Gastrocnemius medialis (tissue), 4 donors: ENCODE measurements at regions of chr14 and their contacts with region 1.

Region 1: GRCh38 chr14:34453229-34453628 is 8.8 kb downstream of the SPTSSA start:
- DNase-seq: no peak
- ATAC-seq: peak in 1 of 2 donors; percentile 36
- H3K4me3 ChIP-seq: no peak overlapping the region
- H3K27ac ChIP-seq: no peak overlapping the region
- H3K4me1 ChIP-seq: peaks cover 7 to 8% of the 10 kb centered on the region in 2 donors
- H3K27me3 ChIP-seq: no peaks in the 10 kb centered on the region
- CTCF ChIP-seq: no peak
- POLR2A ChIP-seq: no peak

Region 2: DNA sequence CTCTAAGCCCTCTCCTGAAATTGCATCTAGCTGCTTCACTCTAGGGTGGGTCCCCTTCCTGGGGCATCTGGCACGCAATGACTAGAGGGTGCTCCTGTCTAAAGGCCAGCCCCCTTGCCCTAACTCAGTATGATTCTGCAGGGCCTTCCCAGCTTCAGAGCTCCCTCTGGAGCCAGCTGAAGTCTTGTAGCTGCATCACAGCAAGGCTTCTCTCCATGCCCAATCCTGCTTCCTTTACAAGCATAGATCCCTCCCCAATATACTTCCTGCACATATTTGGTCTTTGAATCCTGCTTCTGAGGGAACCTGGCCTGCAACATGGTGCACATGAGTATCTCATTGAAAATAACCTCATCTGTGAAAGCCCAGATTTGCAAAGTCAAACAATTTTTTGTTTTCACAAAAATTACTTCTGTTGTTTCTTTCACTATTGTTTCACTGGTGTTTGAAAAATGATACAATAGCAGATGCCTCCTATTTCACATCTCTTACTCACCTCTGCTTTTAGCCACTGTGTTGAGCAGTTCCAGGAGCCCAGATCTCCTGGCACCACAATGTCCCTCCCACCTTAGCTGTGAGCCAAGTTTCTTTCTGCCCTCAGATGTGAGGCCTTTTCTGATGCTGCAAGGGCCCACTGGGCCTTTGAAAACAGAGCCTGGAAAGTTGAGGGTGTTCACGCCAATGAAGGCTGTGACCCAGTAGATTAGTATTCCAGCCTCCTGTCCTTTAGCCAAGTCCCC is 332.8 kb before region 1 on chr14:
- in situ Hi-C with region 1: no loop called
- intact Hi-C with region 1: no loop called
- DNase-seq: peak in 1 of 2 donors; percentile 26
- ATAC-seq: peak in 1 of 2 donors; percentile 76
- H3K4me3 ChIP-seq: no peak overlapping the region
- H3K27ac ChIP-seq: no peak overlapping the region
- H3K4me1 ChIP-seq: no peaks in the 10 kb centered on the region
- H3K27me3 ChIP-seq: no peaks in the 10 kb centered on the region
- CTCF ChIP-seq: no peak
- POLR2A ChIP-seq: no peak

Region 3: DNA sequence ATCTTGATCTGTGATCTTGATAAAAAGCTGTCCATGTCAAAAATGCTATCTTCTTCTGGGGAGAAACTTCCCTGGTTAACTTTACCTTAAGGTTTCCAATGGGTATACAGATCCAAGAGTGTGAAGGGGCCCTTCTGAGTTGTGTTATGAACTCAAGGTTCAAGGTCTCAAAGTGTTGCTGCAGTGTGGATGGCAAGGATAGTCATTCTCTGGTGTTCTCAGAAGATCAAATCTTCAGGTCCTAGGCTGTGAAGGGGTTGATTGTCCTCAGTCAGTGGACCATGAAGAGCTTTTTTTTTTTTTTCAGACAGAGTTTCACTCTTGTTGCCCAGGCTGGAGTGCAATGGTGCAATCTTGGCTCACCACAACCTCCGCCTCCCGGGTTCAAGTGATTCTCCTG is 105.5 kb before region 1 on chr14:
- in situ Hi-C with region 1: no loop called
- intact Hi-C with region 1: loop called (anchors 5 kb)
- DNase-seq: no peak
- ATAC-seq: no peak
- H3K4me3 ChIP-seq: no peak overlapping the region
- H3K27ac ChIP-seq: no peak overlapping the region
- H3K4me1 ChIP-seq: no peaks in the 10 kb centered on the region
- H3K27me3 ChIP-seq: no peaks in the 10 kb centered on the region
- CTCF ChIP-seq: no peak
- POLR2A ChIP-seq: no peak

Region 4: GRCh38 chr14:35189422-35189821 is 736.2 kb after region 1 on chr14:
- in situ Hi-C with region 1: no loop called
- intact Hi-C with region 1: no loop called
- DNase-seq: no peak
- ATAC-seq: no peak
- H3K4me3 ChIP-seq: no peak overlapping the region
- H3K27ac ChIP-seq: no peak overlapping the region
- H3K4me1 ChIP-seq: no peaks in the 10 kb centered on the region
- H3K27me3 ChIP-seq: no peaks in the 10 kb centered on the region
- CTCF ChIP-seq: no peak
- POLR2A ChIP-seq: no peak